ENCODE measurements at regions of chr1 and their contacts with region 1.

Region 1: DNA sequence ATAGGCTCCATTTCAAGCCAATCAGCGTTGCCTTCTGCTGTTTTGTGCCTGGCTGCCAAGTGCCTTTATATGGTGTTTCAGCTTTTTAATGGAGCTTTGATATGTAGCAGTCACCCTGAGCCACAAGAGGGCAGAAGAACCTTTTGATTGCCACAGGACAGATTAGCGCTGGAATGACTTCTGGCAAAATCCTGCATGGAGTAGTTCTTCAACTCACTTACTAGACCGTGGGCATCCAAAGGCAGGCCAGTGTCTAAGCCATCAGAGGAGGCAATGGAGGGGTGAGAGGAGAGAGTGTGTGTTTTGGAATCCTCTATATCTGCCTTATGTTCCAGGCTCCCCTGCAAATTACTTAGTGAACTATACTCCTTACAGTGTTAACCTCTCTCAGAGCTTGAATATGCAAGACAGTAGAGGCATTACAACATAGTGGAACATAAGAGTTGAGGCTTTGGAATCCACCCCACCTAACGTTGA is 56.2 kb downstream of the ST3GAL3 start:
- DNase-seq: peak; percentile 78
- H3K4me3 ChIP-seq: no peak overlapping the region
- H3K27ac ChIP-seq: no peak overlapping the region
- H3K4me1 ChIP-seq: peaks cover 5 to 11% of the 10 kb centered on the region in 2 experiments
- H3K27me3 ChIP-seq: no peaks in the 10 kb centered on the region
- CTCF ChIP-seq: peak; percentile 94
- EP300 ChIP-seq: no peak
- RAD21 ChIP-seq: peak; percentile 99

Region 2: GRCh38 chr1:43460988-43461693 is 302.4 kb before region 1 on chr1:
- CTCF ChIA-PET with region 1: no interaction called
- POLR2A ChIA-PET with region 1: no interaction called
- DNase-seq: no peak
- H3K4me3 ChIP-seq: no peak overlapping the region
- H3K27ac ChIP-seq: no peak overlapping the region
- H3K4me1 ChIP-seq: peaks cover 0 to 11% of the 10 kb centered on the region in 2 experiments; a peak in 1 of 4 replicates
- H3K27me3 ChIP-seq: no peaks in the 10 kb centered on the region
- CTCF ChIP-seq: no peak
- EP300 ChIP-seq: no peak
- RAD21 ChIP-seq: no peak

Region 3: DNA sequence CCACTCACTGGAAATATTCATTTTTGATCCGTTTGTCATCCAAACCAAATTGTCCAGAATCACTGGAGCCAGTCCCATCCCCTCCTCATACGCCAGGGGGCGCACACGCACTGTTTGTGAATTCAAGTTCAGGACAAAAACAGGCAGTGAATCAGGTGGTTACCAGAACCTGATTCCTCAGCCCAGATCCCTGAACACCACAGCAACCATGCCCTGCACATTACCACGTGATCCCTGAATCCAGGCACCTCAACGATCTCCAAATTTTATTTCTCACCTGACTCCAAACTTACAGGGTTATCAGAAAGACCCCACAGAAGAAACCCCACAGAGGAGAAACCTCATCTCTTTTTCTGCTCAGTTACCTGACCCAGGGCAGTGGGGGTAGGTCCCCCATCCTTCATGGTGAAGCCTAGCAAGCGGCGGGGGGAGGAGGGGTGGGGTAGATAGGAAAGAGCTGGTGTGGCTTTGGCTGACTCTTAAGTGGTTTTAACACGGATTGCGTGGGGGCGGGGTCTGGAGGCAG is 234.3 kb before region 1 on chr1:
- CTCF ChIA-PET with region 1: interaction called, 15 read pairs
- POLR2A ChIA-PET with region 1: no interaction called
- DNase-seq: peak; percentile 86
- H3K4me3 ChIP-seq: peak overlapping the region in 1 of 2 experiments; percentile 45; a peak in 1 of 4 replicates
- H3K27ac ChIP-seq: no peak overlapping the region
- H3K4me1 ChIP-seq: peaks cover 4 to 24% of the 10 kb centered on the region in 2 experiments; a peak in 3 of 4 replicates
- H3K27me3 ChIP-seq: no peaks in the 10 kb centered on the region
- CTCF ChIP-seq: peak; percentile 95
- EP300 ChIP-seq: no peak
- RAD21 ChIP-seq: peak; percentile 98

Region 4: DNA sequence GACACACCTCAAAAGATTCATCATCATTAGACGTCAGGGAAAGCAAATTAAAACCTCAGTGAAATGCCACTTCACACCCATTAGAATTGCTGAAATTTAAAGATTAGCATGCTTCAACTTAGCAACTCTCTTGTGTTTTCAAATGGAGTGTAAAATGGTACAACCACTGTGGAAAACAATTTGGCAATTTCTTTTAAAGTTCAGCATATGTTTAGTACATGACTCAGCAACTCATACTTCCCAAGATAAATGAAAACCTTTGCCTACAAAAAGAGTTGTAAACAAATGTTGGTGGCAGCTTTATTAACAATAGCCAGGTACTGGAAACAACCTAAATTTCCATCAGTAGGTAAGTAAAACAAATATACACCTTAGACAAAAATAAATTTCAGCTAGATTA is 13.5 kb before region 1 on chr1:
- CTCF ChIA-PET with region 1: interaction called, 16 read pairs
- POLR2A ChIA-PET with region 1: no interaction called
- DNase-seq: no peak
- H3K4me3 ChIP-seq: no peak overlapping the region
- H3K27ac ChIP-seq: no peak overlapping the region
- H3K4me1 ChIP-seq: no peaks in the 10 kb centered on the region
- H3K27me3 ChIP-seq: no peaks in the 10 kb centered on the region
- CTCF ChIP-seq: no peak
- EP300 ChIP-seq: no peak
- RAD21 ChIP-seq: no peak

Region 5: DNA sequence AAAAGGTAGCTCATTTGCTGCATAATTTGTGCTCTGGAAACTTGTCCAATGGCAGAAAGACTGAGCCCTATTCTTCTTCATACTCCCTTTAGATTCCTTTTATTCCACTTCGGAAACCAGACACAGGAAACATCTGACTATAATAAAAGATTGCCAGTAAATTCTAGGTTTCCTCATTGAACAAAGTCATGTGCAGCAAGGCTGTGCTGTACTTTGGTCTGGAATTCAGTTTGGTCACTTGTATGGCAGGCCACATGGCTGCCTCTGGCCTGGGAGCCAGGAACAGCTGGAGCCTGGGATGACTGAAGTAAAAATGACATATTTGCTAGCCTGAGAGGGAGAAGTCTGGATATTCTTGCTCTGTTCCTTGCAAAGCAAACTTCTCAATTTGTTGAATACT is 23.4 kb after region 1 on chr1:
- CTCF ChIA-PET with region 1: interaction called, 18 read pairs
- POLR2A ChIA-PET with region 1: no interaction called
- DNase-seq: peak; percentile 24
- H3K4me3 ChIP-seq: no peak overlapping the region
- H3K27ac ChIP-seq: peak overlapping the region; percentile 11 to 72; a peak in 2 of 4 replicates
- H3K4me1 ChIP-seq: peaks cover 5 to 32% of the 10 kb centered on the region in 2 experiments; a peak in 3 of 4 replicates
- H3K27me3 ChIP-seq: no peaks in the 10 kb centered on the region
- CTCF ChIP-seq: no peak
- EP300 ChIP-seq: no peak
- RAD21 ChIP-seq: no peak

Region 6: DNA sequence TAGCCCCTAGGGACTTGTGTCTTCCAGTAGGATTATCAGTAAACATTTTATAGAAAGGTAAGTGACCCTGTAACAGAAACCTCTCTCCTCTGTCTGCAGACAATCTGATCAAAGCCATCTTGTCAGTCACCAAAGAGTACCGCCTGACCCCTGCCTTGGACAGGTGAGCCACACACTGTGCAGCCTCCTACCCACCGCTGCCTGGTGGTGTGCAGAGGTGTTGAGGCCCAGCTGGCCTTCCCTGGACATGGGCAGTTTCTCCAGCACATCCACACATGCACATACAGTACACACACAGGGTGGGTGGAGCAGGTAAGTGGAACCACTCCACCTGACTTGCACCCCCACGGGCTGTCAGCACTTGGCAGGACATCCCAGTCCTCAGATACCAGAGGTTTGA is 134.6 kb after region 1 on chr1:
- CTCF ChIA-PET with region 1: interaction called, 13 read pairs
- POLR2A ChIA-PET with region 1: no interaction called
- DNase-seq: no peak
- H3K4me3 ChIP-seq: no peak overlapping the region
- H3K27ac ChIP-seq: no peak overlapping the region
- H3K4me1 ChIP-seq: no peaks in the 10 kb centered on the region
- H3K27me3 ChIP-seq: no peaks in the 10 kb centered on the region
- CTCF ChIP-seq: no peak
- EP300 ChIP-seq: no peak
- RAD21 ChIP-seq: no peak

Region 7: DNA sequence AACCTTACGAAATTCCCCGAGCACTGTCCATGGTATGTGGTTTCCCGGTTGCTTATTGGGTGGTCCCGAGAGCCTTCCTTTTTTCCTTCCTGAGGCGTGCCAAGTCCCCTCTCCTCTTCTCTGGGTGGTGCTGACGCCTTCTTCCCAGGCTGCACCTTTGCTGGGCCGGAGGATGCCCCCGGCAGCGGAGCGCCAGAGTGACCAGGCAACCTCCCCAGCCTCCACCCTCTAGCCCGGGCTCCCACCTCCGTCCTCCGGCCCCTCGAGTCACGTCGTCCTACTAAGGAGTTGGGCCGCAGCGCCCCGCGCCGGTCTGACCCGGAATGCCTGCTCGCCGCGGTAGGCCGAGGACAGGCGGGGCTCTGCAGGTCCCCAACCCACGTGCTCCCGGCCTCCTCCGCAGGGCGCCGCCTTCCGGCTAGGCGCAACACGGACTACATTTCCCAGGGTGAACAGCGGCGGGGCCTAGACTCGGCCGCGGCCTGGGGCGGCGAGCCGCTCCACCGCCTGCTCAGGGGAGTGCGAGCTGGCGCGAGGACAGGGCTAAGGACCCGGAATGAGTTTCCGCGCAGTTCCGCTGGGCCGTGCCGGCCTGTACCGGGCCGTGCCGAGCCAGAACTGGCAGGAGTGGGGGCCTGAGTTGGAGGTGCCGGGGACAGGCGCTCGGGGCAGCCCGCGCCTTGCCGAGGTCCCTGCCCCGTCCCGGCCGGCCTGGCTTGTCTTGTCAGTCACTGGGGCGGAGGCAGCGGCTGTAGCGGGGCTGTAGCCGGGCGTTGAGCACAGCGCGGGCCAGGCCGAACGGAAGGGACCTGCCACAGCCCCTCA is 182.9 kb after region 1 on chr1 and contains the start of gene IPO13:
- CTCF ChIA-PET with region 1: interaction called, 75 read pairs
- POLR2A ChIA-PET with region 1: no interaction called
- DNase-seq: peak; percentile 98
- H3K4me3 ChIP-seq: peak within 1 kb of the TSS; percentile 79 to 93
- H3K27ac ChIP-seq: peak within 1 kb of the TSS; percentile 82 to 97
- H3K4me1 ChIP-seq: peaks cover 12 to 24% of the 10 kb centered on the region in 2 experiments
- H3K27me3 ChIP-seq: no peaks in the 10 kb centered on the region
- CTCF ChIP-seq: peak; percentile 68
- EP300 ChIP-seq: no peak
- RAD21 ChIP-seq: peak; percentile 59
- polyA plus RNA-seq, gene IPO13: 15.5 and 16.7 TPM in 2 replicates

Region 8: DNA sequence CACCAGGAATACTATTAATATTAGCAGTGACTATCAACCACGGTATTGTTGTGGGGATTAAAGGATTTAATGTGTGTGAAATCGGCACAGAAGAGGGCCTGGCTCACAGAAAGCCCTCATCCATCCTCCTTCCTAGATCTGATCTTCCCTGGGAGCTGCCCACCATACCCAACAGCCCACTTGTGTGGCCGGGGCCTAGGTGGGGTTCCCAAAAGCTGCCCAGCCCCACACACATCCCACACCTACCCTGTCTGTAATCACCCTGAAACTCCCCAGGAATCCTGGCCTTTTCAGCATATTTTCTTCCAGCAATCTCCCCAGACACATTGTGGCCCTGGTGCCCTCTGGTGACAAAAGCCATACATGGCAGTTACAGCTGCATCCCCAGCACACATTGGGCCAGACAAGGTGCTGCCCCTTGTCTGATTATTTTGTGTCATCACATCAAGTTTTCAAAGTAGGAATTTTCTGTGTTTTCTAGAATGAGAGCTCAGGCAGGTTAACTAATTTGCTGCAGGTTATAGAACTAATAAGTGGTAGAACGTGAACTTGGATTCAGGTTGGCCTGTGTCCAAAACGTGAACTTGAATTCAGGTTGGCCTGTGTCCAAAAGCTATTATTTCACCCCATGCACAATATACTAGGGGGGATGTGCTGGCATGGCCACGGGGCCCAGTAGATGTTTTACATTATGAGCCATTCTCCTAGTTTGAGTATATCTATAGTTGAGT is 273.0 kb after region 1 on chr1:
- CTCF ChIA-PET with region 1: interaction called, 27 read pairs
- POLR2A ChIA-PET with region 1: no interaction called
- DNase-seq: peak; percentile 79
- H3K4me3 ChIP-seq: no peak overlapping the region; a peak in 1 of 4 replicates
- H3K27ac ChIP-seq: peak overlapping the region in 1 of 2 experiments; percentile 74; a peak in 2 of 4 replicates
- H3K4me1 ChIP-seq: peaks cover 14 to 35% of the 10 kb centered on the region in 2 experiments; a peak in 3 of 4 replicates
- H3K27me3 ChIP-seq: no peaks in the 10 kb centered on the region
- CTCF ChIP-seq: peak; percentile 85
- EP300 ChIP-seq: no peak
- RAD21 ChIP-seq: peak; percentile 89